ENCODE measurements at regions of chrX and their contacts with region 1.

Region 1: GRCh38 chrX:1649621-1650020 is 34.8 kb downstream of the ASMT start:
- DNase-seq: no peak
- ATAC-seq: no peak
- H3K4me3 ChIP-seq: no peak overlapping the region
- H3K27ac ChIP-seq: no peak overlapping the region
- H3K4me1 ChIP-seq: no peaks in the 10 kb centered on the region
- H3K27me3 ChIP-seq: no peaks in the 10 kb centered on the region

Region 2: GRCh38 chrX:1564750-1565683 is 84.6 kb before region 1 on chrX:
- intact Hi-C with region 1: no loop called
- DNase-seq: no peak
- ATAC-seq: no peak
- H3K4me3 ChIP-seq: no peak overlapping the region
- H3K27ac ChIP-seq: no peak overlapping the region
- H3K4me1 ChIP-seq: no peaks in the 10 kb centered on the region
- H3K27me3 ChIP-seq: no peaks in the 10 kb centered on the region

Region 3: DNA sequence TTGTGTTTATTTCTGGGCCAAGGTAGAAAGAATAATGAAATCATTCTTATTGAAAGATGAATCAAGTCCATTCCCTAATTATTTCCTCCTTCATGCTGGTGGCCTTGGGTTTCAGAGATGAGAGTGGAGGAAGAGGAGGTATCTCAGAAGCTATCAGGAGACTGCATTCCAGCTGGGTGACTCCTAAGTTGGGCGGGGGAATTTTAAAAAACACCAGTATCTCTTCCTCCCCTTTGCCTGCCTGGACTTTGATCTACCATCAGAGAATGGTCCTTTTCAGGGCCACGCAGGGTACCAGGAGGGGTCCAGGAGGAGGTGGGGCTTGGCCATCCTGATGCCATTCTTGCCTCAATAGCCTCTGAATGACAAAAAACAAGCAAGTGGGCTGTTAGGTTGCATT is 69.6 kb after region 1 on chrX:
- intact Hi-C with region 1: no loop called
- DNase-seq: no peak
- ATAC-seq: no peak
- H3K4me3 ChIP-seq: no peak overlapping the region
- H3K27ac ChIP-seq: no peak overlapping the region
- H3K4me1 ChIP-seq: no peaks in the 10 kb centered on the region
- H3K27me3 ChIP-seq: no peaks in the 10 kb centered on the region

Region 4: DNA sequence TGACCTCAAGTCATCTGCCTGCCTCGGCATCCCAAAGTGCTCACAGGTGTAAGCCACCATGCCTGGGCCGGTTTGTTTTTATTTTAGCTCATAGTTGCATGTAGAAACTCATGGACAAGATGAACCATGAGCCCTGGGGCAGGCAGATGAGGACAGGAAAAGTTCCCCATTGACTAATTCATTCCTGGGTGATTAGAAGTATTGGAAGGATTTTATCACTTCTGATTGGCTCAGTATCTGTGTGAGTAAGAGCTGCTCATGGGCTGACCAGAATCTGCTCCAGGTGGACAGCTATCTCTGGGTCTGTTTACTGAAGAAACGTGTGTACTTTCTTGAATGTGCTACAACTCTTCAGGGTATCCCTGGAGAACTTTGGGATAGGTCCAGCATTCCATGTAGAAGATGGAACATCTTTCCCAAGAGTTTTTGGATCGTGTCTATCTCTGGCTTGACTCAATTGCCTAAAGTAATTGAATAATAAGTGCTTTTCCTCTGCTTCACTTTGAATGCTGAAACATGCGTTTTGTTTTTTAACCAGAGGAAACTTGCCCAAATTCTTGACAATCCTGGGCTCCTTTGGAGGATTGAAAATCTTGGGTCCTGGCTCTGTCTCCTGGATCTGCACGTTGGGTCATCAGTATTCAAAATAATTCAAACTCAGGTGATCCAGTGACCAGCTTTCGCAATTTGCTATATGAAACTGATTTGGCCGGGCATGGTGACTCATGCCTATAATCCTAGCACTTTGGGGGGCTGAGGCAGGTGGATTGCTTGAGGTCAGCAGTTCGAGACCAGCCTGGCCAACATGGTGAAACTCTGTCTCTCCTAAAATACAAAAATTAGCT is 939.8 kb after region 1 on chrX:
- intact Hi-C with region 1: loop called in 3 of 4 experiments (anchors 5 kb)
- DNase-seq: no peak
- ATAC-seq: no peak
- H3K4me3 ChIP-seq: no peak overlapping the region
- H3K27ac ChIP-seq: no peak overlapping the region
- H3K4me1 ChIP-seq: no peaks in the 10 kb centered on the region
- H3K27me3 ChIP-seq: no peaks in the 10 kb centered on the region